Caco-2 (cell line): ENCODE measurements at regions of chr5 and their contacts with region 1.

Region 1: DNA sequence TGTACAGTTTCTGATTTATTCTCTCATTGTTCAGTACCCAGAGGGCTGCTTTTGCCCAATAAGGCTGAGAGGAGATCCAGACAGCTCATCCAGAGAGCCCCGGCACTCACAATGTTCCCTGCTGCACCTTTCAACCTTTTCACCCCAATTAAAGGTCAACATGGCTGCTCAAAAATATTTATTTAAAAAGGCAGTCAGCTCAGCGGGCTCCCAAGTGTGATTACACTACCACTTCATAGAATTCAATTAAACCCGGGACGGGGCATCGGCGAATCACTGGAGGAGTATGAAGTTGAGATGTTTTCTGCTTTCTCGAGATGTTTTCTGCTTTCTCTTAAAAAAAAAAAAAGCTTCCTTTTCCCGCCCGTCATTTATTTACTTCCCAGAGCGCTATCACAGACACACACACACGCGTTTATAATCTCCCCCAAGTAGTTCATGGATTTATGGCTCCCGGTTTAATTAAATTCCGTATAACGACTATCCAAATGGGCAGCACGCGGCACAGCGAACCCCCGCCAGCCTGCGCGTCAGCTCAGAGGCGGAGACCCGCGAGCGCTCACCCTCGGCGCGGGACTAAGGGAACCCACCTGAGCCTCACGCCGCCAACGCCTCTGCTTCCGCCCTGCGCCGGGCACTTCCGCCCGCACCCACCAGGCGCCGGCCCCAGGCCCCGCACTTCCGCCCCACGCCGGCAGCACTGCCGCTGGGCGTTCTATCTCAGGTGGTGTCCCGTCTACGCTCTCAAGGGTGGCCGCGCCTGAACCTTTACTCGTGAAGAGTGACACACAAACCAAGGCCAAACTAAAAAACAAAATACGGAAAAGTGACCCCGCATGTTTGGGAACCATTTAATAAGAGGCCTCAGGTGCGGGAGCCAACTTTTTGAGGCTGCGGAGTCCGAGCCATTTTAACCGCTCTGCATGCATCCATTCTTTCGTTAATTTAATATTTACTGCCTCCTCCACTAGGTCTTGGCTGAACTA is at the start of gene C5orf63:
- DNase-seq: peak; percentile 78 to 79
- H3K4me3 ChIP-seq: peak within 1 kb of the TSS; percentile 50
- H3K4me3 Mint-ChIP-seq: peak within 1 kb of the TSS; percentile 77
- H3K27ac Mint-ChIP-seq: peak within 1 kb of the TSS; percentile 73
- H3K4me1 ChIP-seq: peaks cover 15% of the 10 kb centered on the region
- H3K4me1 Mint-ChIP-seq: peaks cover 9% of the 10 kb centered on the region
- H3K27me3 ChIP-seq: no peaks in the 10 kb centered on the region
- H3K27me3 Mint-ChIP-seq: no peaks in the 10 kb centered on the region
- CTCF ChIP-seq: peak; percentile 25 to 39
- total RNA-seq, gene C5orf63: 7.6 and 10.5 TPM in 2 replicates

Region 2: DNA sequence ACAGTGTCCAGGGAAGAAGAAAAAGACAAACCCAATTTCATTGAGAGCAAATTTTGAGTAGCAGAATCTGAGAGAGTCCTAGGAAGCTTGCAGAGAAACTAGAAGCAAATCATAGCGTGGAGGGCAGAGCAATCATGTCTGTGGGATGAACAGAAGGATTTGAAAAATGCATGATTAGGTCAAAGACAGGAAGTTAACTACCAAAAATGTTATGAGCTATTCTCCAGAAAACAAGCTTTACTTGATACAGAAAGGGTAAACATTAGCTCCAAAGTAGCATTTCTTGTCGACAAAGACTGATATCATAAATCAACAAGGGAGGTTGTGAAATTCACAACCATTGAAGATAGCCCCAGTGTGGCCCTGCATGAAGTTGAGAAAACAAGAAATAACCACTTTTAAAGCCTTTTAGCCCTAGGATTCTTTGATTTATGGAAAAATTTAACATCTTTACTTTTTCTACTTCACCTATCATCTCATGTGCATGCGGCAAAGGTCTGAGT is 119.7 kb after region 1 on chr5:
- CTCF ChIA-PET with region 1: no interaction called
- POLR2A ChIA-PET with region 1: no interaction called
- intact Hi-C with region 1: loop called (anchors 10 kb)
- DNase-seq: no peak
- H3K4me3 ChIP-seq: no peak overlapping the region
- H3K4me3 Mint-ChIP-seq: no peak overlapping the region
- H3K27ac Mint-ChIP-seq: no peak overlapping the region
- H3K4me1 ChIP-seq: 0 out of 2 replicates have a peak, but pooled peaks cover 8% of the 10 kb centered on the region
- H3K4me1 Mint-ChIP-seq: peaks cover 7% of the 10 kb centered on the region
- H3K27me3 ChIP-seq: no peaks in the 10 kb centered on the region
- H3K27me3 Mint-ChIP-seq: no peaks in the 10 kb centered on the region
- CTCF ChIP-seq: no peak